ENCODE measurements at regions of chr5 and their contacts with region 1.

Region 1: DNA sequence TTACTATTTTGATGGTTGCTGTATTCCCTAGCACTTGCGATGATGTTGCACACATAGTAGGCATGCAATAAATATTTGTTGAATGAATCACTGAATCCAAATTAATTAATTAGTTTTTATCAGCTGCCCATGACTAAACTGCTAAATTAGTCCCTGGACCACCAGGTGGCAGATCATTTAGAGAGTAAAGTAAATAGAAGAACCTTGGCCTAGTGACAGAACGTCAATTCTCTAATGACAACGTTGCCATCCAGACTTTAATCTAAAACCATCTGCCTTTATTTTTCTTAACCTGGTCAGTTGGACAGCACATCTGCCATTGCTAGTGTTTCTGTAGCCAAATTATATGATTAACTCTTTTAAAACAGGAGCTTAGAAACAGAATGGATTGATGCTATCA is 457.5 kb downstream of the KIF4B start:
- DNase-seq: no peak
- H3K4me3 ChIP-seq: no peak overlapping the region
- H3K27ac ChIP-seq: no peak overlapping the region
- H3K4me1 ChIP-seq: peaks cover 0 to 9% (median 5%) of the 10 kb centered on the region in 4 experiments; a peak in 3 of 7 replicates
- H3K27me3 ChIP-seq: no peaks in the 10 kb centered on the region
- CTCF ChIP-seq: peak in 1 of 3 experiments; percentile 7; a peak in 1 of 4 replicates
- EP300 ChIP-seq: no peak
- POLR2A ChIP-seq: no peak
- RAD21 ChIP-seq: no peak

Region 2: DNA sequence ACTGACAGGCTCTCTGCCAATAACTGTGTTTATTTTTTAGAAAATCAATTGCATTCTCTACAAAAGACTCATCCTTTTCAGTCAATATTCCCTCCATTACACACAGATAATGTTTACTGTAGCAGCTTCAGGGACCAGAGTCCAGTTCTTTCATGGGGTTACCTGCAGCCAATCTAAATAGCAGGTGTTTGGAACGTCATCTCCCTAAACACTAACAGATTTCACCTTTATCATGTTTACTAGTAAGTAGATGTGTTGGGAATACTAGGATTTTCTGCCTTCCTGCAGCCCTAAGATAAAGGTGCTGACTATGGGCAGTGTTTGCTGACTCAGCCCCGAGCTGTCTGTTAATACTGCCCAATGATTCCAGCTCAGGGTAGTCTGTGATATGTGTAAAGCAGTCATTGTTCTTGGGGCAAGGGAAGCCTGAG is 10.5 kb before region 1 on chr5:
- CTCF ChIA-PET with region 1: interaction called, 19 read pairs
- POLR2A ChIA-PET with region 1: no interaction called
- DNase-seq: no peak
- H3K4me3 ChIP-seq: no peak overlapping the region
- H3K27ac ChIP-seq: no peak overlapping the region
- H3K4me1 ChIP-seq: no peaks in the 10 kb centered on the region
- H3K27me3 ChIP-seq: no peaks in the 10 kb centered on the region
- CTCF ChIP-seq: no peak
- EP300 ChIP-seq: no peak
- POLR2A ChIP-seq: no peak
- RAD21 ChIP-seq: no peak

Measured in H1 (cell line).